ENCODE measurements at regions of chr11 and their contacts with region 1.

Region 1: DNA sequence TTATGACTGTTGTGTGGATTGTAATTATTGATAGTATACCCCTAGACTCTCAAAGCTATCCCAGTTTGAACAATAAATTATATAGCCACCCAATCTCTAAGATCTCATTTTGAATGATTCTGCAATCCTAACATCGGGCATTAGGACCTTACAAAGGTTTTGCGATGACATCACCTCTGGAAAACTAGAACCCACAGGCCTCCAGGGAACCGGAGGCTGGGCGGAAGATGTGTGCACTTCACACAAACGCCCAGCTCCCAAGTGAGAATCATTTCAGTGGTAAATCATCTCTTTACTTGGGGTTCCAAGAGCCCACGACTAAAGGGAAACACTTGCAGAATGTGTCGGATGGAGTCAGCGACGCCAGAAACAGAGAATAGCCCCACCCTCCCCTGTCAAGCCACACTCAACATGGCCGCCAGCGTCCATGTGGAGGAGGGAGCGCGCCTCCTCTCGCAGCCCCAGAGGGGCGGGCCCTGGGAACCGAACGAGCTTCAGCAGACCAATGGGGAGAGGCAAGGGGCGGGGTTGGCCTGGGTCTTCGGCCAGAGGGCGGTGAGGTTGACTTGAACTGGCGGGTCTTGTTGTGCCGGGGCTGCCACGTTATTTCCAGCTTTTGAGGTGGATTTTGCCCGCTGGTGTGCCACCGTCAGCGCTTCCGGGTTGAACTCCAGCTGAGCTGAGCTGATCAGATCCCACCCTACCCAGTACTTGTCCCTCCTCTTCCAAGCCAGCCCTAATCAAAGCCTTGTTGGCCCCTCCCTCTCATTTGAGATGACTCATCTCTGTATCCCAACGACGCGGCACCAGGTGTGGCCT is 8.4 kb upstream of the MRPL48 start:
- DNase-seq: peak; percentile 99
- H3K4me3 Mint-ChIP-seq: peak overlapping the region; percentile 83
- H3K27ac Mint-ChIP-seq: peak overlapping the region; percentile 100
- H3K4me1 Mint-ChIP-seq: peaks cover 23% of the 10 kb centered on the region
- H3K27me3 Mint-ChIP-seq: no peaks in the 10 kb centered on the region

Region 2: GRCh38 chr11:73597956-73598718 is 181.2 kb before region 1 on chr11 and contains the start of gene FAM168A:
- CTCF ChIA-PET with region 1: no interaction called
- POLR2A ChIA-PET with region 1: no interaction called
- DNase-seq: peak; percentile 94
- H3K4me3 Mint-ChIP-seq: peak within 1 kb of the TSS; percentile 90
- H3K27ac Mint-ChIP-seq: peak within 1 kb of the TSS; percentile 97
- H3K4me1 Mint-ChIP-seq: peaks cover 39% of the 10 kb centered on the region
- H3K27me3 Mint-ChIP-seq: no peaks in the 10 kb centered on the region
- total RNA-seq, gene FAM168A: 28.9 to 31.2 TPM

Region 3: GRCh38 chr11:73760679-73761402 is 18.5 kb before region 1 on chr11 and contains the start of gene RAB6A:
- CTCF ChIA-PET with region 1: interaction called, 70 read pairs
- POLR2A ChIA-PET with region 1: interaction called, 12 read pairs
- DNase-seq: peak; percentile 100
- H3K4me3 Mint-ChIP-seq: peak within 1 kb of the TSS; percentile 86
- H3K27ac Mint-ChIP-seq: peak within 1 kb of the TSS; percentile 91
- H3K4me1 Mint-ChIP-seq: peaks cover 30% of the 10 kb centered on the region
- H3K27me3 Mint-ChIP-seq: peaks cover 6% of the 10 kb centered on the region
- total RNA-seq, gene RAB6A: 82.1 to 83.8 TPM